Vagina (tissue), 2 donors: ENCODE measurements at regions of chr1 and their contacts with region 1.

Region 1: GRCh38 chr1:157240495-157241184 is 102.4 kb upstream of the ETV3 start:
- DNase-seq: peak in 1 of 2 donors; percentile 42
- H3K4me3 ChIP-seq: no peak overlapping the region
- H3K27ac ChIP-seq: no peak overlapping the region
- H3K4me1 ChIP-seq: no peaks in the 10 kb centered on the region
- H3K27me3 ChIP-seq: no peaks in the 10 kb centered on the region
- CTCF ChIP-seq: no peak
- POLR2A ChIP-seq: no peak

Region 2: DNA sequence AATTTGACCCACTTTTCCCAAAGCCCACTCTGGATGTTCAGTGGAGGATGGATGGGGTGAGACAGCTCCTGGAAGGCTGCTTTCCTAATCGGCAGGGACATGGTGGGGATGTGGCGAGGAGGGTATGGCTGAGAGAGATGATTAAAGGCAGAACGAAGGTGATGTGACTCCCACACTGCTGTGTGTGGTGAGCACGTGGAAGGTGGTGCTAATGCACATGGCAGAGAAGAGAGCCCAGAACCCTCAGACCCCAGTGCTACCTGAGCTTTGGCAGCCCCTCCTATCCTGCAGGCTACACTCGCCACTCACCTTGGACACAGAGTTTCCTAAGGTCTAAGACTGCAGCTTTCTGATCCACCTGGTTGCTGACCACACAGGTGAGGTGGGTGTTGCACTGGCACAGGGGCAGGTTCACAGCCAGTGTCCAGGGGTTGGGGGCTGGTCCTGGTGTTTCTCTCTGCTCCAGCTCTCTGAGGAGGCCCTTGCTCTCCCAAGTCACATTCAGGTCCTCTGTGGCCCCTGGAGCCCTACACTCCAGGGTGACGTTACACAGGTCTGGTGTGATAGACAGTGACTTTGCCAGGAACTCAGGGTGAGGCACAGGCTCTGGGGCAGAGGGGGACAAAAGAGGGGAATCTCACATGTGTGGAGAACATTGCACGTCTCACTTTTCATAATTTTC is 48.9 kb after region 1 on chr1:
- intact Hi-C with region 1: no loop called
- DNase-seq: peak in 1 of 2 donors; percentile 72
- H3K4me3 ChIP-seq: no peak overlapping the region
- H3K27ac ChIP-seq: no peak overlapping the region
- H3K4me1 ChIP-seq: no peaks in the 10 kb centered on the region
- H3K27me3 ChIP-seq: no peaks in the 10 kb centered on the region
- CTCF ChIP-seq: no peak
- POLR2A ChIP-seq: no peak

Region 3: GRCh38 chr1:158067662-158068061 is 827.0 kb after region 1 on chr1:
- intact Hi-C with region 1: loop called (anchors 10 kb)
- DNase-seq: no peak
- H3K4me3 ChIP-seq: no peak overlapping the region
- H3K27ac ChIP-seq: no peak overlapping the region
- H3K4me1 ChIP-seq: peaks cover 87% of the 10 kb centered on the region
- H3K27me3 ChIP-seq: no peaks in the 10 kb centered on the region
- CTCF ChIP-seq: no peak
- POLR2A ChIP-seq: no peak